Activated CD4-positive, alpha-beta memory T cell treated with anti-CD3 and anti-CD28 coated beads for 36 hours (primary cell): ENCODE measurements at regions of chr1 and their contacts with region 1.

Region 1: DNA sequence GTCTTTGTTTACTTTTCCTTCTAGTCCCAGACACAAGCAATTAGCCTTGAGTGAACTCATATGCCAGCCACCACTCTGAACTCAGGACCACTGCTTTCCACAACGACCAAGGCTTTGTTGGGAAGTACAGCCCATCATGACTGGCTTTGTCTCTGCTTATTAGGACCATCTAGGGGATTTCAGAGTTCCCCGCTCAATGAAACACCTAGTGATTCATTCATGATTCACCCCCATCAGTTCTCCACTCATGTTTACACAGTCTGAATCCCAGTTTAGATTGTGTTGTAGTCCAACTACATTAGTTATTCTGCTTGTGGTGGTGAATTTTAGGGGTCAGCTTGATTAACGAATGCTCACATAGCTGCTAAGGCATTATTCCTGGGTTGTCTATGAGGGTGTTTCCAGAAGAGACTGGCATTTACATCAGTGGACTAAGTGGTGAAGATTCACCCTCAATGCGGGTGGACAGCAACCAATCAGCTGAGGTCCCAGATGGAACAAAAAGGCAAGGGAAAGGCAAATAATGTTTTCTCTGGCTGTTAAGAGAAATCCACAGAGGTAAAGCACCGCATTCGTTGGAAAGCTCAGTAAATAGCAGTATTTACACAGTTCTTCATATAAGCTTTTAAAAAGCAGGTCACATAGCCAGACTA is 122.7 kb downstream of the RGS21 start:
- DNase-seq: no peak
- H3K4me3 Mint-ChIP-seq: no peak overlapping the region
- H3K27ac Mint-ChIP-seq: no peak overlapping the region
- H3K4me1 Mint-ChIP-seq: no peaks in the 10 kb centered on the region
- H3K27me3 Mint-ChIP-seq: peaks cover 2% of the 10 kb centered on the region

Region 2: GRCh38 chr1:192378276-192378675 is 61.2 kb before region 1 on chr1:
- CTCF ChIA-PET with region 1: no interaction called
- POLR2A ChIA-PET with region 1: no interaction called
- intact Hi-C with region 1: loop called (anchors 10 kb)
- DNase-seq: no peak
- H3K4me3 Mint-ChIP-seq: no peak overlapping the region
- H3K27ac Mint-ChIP-seq: no peak overlapping the region
- H3K4me1 Mint-ChIP-seq: no peaks in the 10 kb centered on the region
- H3K27me3 Mint-ChIP-seq: no peaks in the 10 kb centered on the region